WTC11 (cell line): ENCODE measurements at regions of chr19 and their contacts with region 1.

Region 1: DNA sequence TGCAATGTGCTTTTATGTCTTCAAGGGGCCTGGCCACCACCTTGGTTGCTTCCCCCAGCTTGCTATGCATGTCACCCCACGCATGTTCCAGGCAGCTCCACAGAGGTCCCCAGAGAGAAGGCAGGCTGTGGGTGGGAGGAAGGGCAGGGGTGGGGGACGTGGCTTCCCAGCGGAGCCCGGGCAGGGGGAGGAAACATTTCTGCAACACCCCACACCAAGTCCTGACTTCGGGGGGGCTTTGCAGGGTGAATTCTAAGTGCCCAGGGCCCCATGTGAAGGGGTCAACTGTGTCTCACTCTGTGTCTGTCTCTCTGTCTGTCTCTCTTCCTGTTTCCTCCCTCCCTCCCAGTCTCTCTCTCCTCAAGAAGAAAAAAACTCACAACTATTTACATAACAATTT is 39.6 kb downstream of the LTBP4 start:
- DNase-seq: no peak
- ATAC-seq: no peak; the same call in 1 of the 2 replicates
- H3K4me3 Mint-ChIP-seq: no peak overlapping the region
- H3K27ac Mint-ChIP-seq: no peak overlapping the region
- H3K4me1 Mint-ChIP-seq: peaks cover 10% of the 10 kb centered on the region
- H3K27me3 Mint-ChIP-seq: peaks cover 15% of the 10 kb centered on the region
- CTCF ChIP-seq: no peak

Region 2: GRCh38 chr19:40523322-40524047 is 117.3 kb before region 1 on chr19:
- CTCF ChIA-PET with region 1: interaction called, 14 read pairs
- POLR2A ChIA-PET with region 1: no interaction called
- DNase-seq: peak; percentile 87
- ATAC-seq: peak; percentile 91
- H3K4me3 Mint-ChIP-seq: no peak overlapping the region
- H3K27ac Mint-ChIP-seq: no peak overlapping the region
- H3K4me1 Mint-ChIP-seq: peaks cover 6% of the 10 kb centered on the region
- H3K27me3 Mint-ChIP-seq: peaks cover 65% of the 10 kb centered on the region
- CTCF ChIP-seq: peak; percentile 75

Region 3: DNA sequence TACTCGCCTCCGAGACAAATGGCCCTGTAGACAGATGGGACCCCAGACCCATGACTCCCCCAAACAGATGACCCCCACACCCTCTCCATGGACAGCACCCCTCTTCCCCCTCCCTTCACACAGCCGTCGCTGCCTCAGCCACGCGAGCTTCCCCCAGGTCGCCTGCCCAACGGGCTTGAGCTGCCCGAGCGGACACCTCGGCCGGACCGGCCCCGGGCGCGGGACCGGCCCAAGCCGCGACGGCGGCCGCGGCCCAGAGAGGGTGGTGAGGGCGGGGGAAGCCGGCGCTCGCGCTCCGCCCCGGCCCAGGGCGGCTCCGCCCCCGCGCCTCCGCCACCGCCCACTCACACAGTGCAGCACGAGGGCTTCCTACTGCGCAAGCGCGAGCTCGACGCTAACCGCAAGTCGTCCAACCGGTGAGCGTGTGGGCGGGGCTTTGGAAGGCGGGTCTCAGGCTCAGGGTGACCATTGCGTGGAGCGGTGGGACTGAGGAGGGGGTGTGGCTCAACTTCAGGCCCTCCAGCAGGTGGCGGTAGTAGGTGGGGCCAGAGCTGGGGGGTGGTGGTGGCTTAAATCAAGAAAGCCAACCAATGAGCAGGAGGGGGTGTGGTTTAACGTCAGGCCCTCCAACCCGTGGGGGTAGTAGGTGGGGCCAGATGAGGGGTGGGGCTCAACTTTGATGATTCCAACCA is 70.3 kb before region 1 on chr19:
- CTCF ChIA-PET with region 1: interaction called, 17 read pairs
- POLR2A ChIA-PET with region 1: no interaction called
- DNase-seq: peak; percentile 100
- ATAC-seq: peak; percentile 96
- H3K4me3 Mint-ChIP-seq: peak overlapping the region; percentile 75
- H3K27ac Mint-ChIP-seq: no peak overlapping the region; the same call in 1 of the 2 replicates
- H3K4me1 Mint-ChIP-seq: peaks cover 15% of the 10 kb centered on the region
- H3K27me3 Mint-ChIP-seq: peaks cover 78% of the 10 kb centered on the region
- CTCF ChIP-seq: no peak

Region 4: DNA sequence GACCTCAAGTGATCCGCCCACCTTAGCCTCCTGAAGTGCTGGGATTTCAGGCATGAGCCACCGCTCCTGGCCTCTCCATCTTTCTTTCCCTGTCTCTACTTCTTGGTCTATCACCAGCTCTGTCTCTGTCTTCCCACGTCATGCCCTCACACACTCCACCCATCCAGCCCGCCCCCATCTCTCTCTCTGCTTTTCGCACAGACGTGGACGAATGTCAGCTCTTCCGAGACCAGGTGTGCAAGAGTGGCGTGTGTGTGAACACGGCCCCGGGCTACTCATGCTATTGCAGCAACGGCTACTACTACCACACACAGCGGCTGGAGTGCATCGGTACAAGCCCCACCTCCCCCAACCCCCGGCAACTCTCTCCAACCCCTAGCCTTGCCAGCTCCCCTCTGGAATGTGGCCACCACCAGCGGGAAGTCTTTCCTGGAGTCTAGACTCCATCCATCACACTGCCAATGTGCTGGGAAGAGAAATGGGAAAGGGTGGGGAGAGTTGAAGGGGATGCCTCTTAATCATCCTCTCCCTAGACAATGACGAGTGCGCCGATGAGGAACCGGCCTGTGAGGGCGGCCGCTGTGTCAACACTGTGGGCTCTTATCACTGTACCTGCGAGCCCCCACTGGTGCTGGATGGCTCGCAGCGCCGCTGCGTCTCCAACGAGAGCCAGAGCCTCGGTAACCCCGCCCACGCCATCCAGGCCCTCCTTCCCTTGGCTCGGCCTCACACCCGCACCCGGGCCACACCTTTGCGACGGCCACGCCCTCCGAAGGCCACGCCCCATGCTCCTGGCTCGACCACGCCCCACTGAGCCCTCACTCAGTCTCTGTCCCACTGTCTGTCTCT is 17.1 kb before region 1 on chr19:
- CTCF ChIA-PET with region 1: interaction called, 50 read pairs
- POLR2A ChIA-PET with region 1: no interaction called
- DNase-seq: peak; percentile 98
- ATAC-seq: peak; percentile 92
- H3K4me3 Mint-ChIP-seq: peak overlapping the region; percentile 55
- H3K27ac Mint-ChIP-seq: peak overlapping the region; percentile 93
- H3K4me1 Mint-ChIP-seq: peaks cover 19% of the 10 kb centered on the region
- H3K27me3 Mint-ChIP-seq: no peaks in the 10 kb centered on the region; the same call in 1 of the 2 replicates
- CTCF ChIP-seq: no peak

Region 5: DNA sequence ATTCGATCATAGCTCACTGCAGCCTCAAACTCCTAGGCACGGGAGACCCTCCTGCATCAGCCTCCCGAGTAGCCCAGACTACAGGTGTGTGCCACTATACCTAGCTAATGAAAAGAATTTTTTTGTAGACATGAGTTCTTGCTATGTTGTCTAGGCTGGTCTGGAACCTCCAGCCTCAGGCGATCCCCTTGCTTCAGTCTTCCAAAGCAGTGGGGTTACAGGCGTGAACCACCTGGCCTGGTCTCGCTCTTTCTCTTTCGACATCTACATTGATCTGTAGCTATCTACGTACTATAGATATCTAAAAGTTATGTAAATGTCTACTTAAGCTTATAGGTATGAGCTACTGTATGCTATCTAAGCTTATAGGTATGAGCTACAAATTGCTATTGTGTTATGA is 17.3 kb after region 1 on chr19:
- CTCF ChIA-PET with region 1: interaction called, 16 read pairs
- POLR2A ChIA-PET with region 1: no interaction called
- DNase-seq: no peak
- ATAC-seq: no peak
- H3K4me3 Mint-ChIP-seq: no peak overlapping the region
- H3K27ac Mint-ChIP-seq: no peak overlapping the region
- H3K4me1 Mint-ChIP-seq: no peaks in the 10 kb centered on the region
- H3K27me3 Mint-ChIP-seq: no peaks in the 10 kb centered on the region; the same call in 1 of the 2 replicates
- CTCF ChIP-seq: no peak

Region 6: DNA sequence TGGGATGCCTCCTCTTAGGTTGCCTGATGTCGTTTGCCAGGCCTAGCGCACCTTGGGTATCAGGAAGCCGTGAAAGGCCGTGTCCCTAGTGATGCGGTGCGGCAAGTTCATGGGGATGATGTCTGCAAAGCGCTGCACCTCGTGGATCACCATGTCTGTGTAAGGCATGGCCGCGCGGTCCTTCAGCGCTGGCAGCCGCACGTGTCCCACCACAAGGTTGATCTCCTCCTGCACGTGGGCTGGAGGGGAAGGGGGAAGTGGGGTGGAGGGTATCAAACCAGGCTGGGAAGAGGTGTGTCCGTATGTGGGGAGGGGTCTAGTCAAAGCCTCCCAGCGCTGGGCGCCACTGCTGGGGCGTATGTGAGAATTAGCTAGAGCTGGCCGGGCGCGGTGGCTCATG is 181.4 kb after region 1 on chr19:
- CTCF ChIA-PET with region 1: no interaction called
- POLR2A ChIA-PET with region 1: no interaction called
- DNase-seq: no peak
- ATAC-seq: no peak
- H3K4me3 Mint-ChIP-seq: no peak overlapping the region
- H3K27ac Mint-ChIP-seq: peak overlapping the region; percentile 68
- H3K4me1 Mint-ChIP-seq: peaks cover 16% of the 10 kb centered on the region
- H3K27me3 Mint-ChIP-seq: peaks cover 14% of the 10 kb centered on the region
- CTCF ChIP-seq: no peak